A549 (cell line): ENCODE measurements at regions of chr6 and their contacts with region 1.

Region 1: DNA sequence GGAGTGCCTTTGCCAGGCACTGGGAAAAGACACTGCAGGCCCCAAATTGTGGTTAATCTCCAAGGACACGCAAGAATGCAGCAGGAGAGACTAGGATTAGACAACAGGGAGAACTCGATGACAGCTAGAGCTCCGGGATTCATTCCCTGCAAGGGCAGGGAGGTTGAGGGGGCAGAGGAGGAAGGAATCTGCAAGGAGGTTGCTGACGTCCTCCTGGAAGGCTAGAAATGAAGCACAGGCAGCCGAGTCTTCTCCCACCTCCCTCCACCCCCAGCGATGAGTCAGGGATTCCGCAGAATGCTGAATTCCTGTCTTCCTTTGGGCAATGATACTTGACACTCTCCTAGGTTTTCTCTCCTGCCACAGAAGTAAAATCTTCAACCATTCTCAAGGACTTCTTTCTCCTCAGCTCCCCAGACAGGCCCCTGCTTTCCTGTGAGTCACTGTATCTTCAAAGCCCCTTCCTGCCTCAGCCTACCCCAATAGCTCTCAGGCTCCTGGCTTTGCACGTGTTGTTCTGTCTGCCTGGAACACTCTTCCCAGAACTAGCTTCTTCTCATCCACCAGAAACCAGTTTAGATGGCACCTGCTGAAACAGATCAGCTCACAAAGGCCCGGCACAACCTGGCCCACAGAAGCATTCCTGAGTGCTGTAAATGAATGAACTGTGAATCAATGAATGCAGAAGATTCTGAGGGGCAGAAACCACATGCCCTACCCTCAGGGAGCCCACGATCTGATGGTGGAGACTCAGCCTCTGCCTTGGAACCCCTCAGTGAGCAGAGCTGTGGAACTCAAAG is 85.6 kb downstream of the MRPL14 start:
- DNase-seq: peak; percentile 57 to 83
- ATAC-seq: peak; percentile 58 to 70
- H3K4me3 ChIP-seq: no peak overlapping the region
- H3K27ac ChIP-seq: peak overlapping the region; percentile 95 to 98
- H3K4me1 ChIP-seq: peaks cover 76% of the 10 kb centered on the region
- CTCF ChIP-seq: no peak
- EP300 ChIP-seq: peak in 1 of 2 experiments; percentile 35; a peak in 1 of 5 replicates
- POLR2A ChIP-seq: no peak
- RAD21 ChIP-seq: 0 out of 5 replicates have a peak, but pooled peaks of 1 of the 2 experiments have one; percentile 0

Region 2: DNA sequence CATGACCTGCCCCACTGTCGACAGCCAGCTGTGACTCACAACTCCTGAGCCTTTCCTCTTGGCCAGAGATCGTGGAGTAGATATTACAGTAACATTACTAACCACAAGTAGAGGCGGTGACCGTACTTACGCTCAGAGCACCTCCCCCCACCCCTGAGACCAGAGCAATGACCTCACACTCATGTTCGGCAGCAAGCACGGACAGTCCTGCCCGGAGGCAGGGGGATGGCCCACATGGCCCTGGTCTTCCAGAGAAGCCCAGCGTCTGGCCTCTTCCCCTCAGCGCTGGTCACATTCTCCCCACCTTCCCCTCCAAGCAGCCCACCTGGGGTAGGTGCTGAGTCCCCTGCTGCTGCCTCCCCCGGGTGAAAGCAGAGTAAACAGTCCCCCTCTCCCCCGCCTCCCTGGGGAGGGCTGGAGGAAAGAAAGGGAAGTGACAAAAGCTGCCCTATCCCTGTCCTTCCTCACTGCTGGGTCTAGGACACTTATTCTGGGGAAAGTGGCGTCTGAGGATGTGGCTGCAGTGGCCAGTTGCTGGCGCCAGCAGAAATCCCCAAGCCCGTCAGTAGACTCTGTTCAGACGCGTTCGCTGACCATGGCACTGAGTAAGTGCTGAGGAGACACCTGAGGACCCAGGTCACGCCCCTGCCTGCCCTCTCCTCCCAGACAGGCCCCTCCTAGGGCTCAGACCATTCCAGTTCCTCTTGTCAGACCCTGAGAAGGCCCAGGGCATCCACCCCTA is 17.1 kb after region 1 on chr6:
- CTCF ChIA-PET with region 1: interaction called, 9 read pairs
- POLR2A ChIA-PET with region 1: interaction called, 10 read pairs
- DNase-seq: peak; percentile 85 to 96
- ATAC-seq: peak; percentile 90 to 95
- H3K4me3 ChIP-seq: no peak overlapping the region
- H3K27ac ChIP-seq: peak overlapping the region; percentile 97 to 98
- H3K4me1 ChIP-seq: peaks cover 75% of the 10 kb centered on the region
- CTCF ChIP-seq: no peak
- EP300 ChIP-seq: peak; percentile 69 to 85; a peak in 2 of 5 replicates
- POLR2A ChIP-seq: no peak
- RAD21 ChIP-seq: peak in 1 of 2 experiments; percentile 50; a peak in 2 of 5 replicates